ENCODE measurements at regions of chr14 and their contacts with region 1.

Region 1: GRCh38 chr14:78566026-78566858 is 396.1 kb downstream of the NRXN3 start:
- DNase-seq: peak; percentile 73
- ATAC-seq: peak; percentile 84
- H3K4me3 Mint-ChIP-seq: no peak overlapping the region
- H3K27ac Mint-ChIP-seq: no peak overlapping the region
- H3K4me1 Mint-ChIP-seq: no peaks in the 10 kb centered on the region
- H3K27me3 Mint-ChIP-seq: no peaks in the 10 kb centered on the region

Region 2: GRCh38 chr14:77862154-77862786 is 704.0 kb before region 1 on chr14:
- CTCF ChIA-PET with region 1: interaction called, 10 read pairs
- POLR2A ChIA-PET with region 1: no interaction called
- DNase-seq: peak; percentile 83
- ATAC-seq: peak; percentile 81
- H3K4me3 Mint-ChIP-seq: no peak overlapping the region
- H3K27ac Mint-ChIP-seq: no peak overlapping the region
- H3K4me1 Mint-ChIP-seq: no peaks in the 10 kb centered on the region
- H3K27me3 Mint-ChIP-seq: no peaks in the 10 kb centered on the region

Region 3: DNA sequence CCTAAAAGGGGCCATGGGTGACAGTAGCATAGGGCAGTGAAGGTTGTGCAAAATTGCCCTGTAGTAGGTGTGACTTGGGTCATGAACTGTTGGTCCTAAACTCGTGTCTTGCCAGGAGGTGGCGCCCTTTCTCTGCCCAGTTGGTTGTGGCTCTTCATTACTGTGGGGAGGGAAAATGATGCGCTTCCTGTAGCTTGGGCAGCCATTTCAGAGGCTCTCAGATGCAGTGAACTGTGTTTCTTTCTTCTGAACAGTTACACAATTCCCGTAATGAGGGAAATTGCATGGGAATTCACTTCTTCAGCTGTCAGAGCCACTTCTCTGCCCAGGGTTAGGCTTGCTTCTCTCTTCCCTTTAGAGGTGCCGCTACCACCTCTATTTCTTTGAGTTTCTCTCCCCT is 544.2 kb before region 1 on chr14:
- CTCF ChIA-PET with region 1: interaction called, 22 read pairs
- POLR2A ChIA-PET with region 1: no interaction called
- DNase-seq: peak; percentile 77
- ATAC-seq: peak; percentile 69
- H3K4me3 Mint-ChIP-seq: no peak overlapping the region
- H3K27ac Mint-ChIP-seq: no peak overlapping the region
- H3K4me1 Mint-ChIP-seq: no peaks in the 10 kb centered on the region
- H3K27me3 Mint-ChIP-seq: no peaks in the 10 kb centered on the region

Region 4: GRCh38 chr14:78448164-78449094 is 117.8 kb before region 1 on chr14:
- CTCF ChIA-PET with region 1: interaction called, 23 read pairs
- POLR2A ChIA-PET with region 1: no interaction called
- DNase-seq: peak; percentile 66
- ATAC-seq: no peak
- H3K4me3 Mint-ChIP-seq: no peak overlapping the region
- H3K27ac Mint-ChIP-seq: no peak overlapping the region
- H3K4me1 Mint-ChIP-seq: no peaks in the 10 kb centered on the region
- H3K27me3 Mint-ChIP-seq: no peaks in the 10 kb centered on the region

Region 5: GRCh38 chr14:78581229-78581628 is 15.0 kb after region 1 on chr14:
- CTCF ChIA-PET with region 1: interaction called, 18 read pairs
- POLR2A ChIA-PET with region 1: interaction called, 3 read pairs
- DNase-seq: no peak
- ATAC-seq: no peak
- H3K4me3 Mint-ChIP-seq: no peak overlapping the region
- H3K27ac Mint-ChIP-seq: no peak overlapping the region
- H3K4me1 Mint-ChIP-seq: no peaks in the 10 kb centered on the region
- H3K27me3 Mint-ChIP-seq: peaks cover 1% of the 10 kb centered on the region